Prostate gland (tissue), 2 donors: ENCODE measurements at regions of chr11 and their contacts with region 1.

Region 1: GRCh38 chr11:74611369-74611861 is 19.0 kb downstream of the POLD3 start:
- DNase-seq: no peak
- H3K4me3 ChIP-seq: no peak overlapping the region
- H3K27ac ChIP-seq: peak overlapping the region in 1 of 2 donors; percentile 43
- H3K4me1 ChIP-seq: peaks cover 7% of the 10 kb centered on the region
- H3K27me3 ChIP-seq: no peaks in the 10 kb centered on the region
- CTCF ChIP-seq: peak in 3 of 4 experiments; percentile 35 to 62 (median 62)
- POLR2A ChIP-seq: no peak

Region 2: DNA sequence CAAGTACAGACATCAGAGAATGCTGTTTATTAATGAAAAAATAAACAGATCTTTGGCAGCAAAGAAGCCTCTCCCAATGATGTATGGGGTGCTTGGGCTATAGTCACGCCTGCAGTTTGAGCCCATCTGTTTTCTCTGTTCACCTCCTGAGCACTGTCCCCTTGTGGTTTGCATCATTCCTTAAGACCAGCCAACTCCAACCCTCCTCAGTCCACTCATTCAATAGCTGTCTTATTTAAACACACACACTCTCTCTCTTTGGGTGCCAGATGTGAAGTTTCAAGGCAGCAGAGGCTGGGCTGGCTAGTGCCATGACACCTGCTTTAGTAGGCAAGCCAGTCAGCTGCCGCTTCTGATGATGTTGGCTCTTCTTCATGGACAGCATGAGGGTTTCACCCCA is 39.1 kb after region 1 on chr11:
- intact Hi-C with region 1: no loop called
- DNase-seq: no peak
- H3K4me3 ChIP-seq: no peak overlapping the region
- H3K27ac ChIP-seq: no peak overlapping the region
- H3K4me1 ChIP-seq: no peaks in the 10 kb centered on the region
- H3K27me3 ChIP-seq: no peaks in the 10 kb centered on the region
- CTCF ChIP-seq: no peak
- POLR2A ChIP-seq: no peak

Region 3: DNA sequence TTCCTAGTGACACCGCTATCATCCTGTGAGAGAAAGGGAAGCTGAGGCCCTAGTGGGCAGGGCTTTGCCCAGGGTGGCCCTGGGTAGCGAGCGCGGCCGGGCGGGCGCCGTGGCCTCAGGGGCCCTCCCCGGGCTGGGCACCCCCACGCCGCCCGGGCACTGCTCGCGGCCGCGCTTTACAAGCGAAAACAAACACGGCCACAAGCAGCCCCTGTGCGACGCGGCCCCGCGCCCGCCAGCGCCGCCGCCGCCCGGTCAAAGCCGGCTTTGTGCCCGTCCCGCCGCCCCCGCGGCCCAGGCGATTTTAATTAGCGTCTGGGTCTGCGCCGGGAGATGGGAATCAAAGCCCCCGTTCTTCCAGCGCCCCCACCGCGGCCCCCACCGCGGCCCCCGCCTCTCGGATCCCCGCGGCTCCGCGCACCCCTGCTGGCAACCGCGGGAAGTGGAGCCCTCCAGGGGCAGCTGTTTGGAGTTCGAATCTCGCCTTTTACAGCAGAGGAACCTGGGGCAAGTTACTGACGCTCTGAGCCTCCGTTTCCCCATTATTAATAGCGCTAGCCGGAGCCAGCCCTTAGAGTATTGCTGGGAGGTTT is 72.0 kb after region 1 on chr11:
- intact Hi-C with region 1: loop called (anchors 5 kb)
- DNase-seq: peak; percentile 36
- H3K4me3 ChIP-seq: peak overlapping the region; percentile 27 to 38
- H3K27ac ChIP-seq: peak overlapping the region; percentile 18 to 76
- H3K4me1 ChIP-seq: peaks cover 10% of the 10 kb centered on the region
- H3K27me3 ChIP-seq: no peaks in the 10 kb centered on the region
- CTCF ChIP-seq: peak in 3 of 4 experiments; percentile 28 to 48 (median 32)
- POLR2A ChIP-seq: no peak

Region 4: DNA sequence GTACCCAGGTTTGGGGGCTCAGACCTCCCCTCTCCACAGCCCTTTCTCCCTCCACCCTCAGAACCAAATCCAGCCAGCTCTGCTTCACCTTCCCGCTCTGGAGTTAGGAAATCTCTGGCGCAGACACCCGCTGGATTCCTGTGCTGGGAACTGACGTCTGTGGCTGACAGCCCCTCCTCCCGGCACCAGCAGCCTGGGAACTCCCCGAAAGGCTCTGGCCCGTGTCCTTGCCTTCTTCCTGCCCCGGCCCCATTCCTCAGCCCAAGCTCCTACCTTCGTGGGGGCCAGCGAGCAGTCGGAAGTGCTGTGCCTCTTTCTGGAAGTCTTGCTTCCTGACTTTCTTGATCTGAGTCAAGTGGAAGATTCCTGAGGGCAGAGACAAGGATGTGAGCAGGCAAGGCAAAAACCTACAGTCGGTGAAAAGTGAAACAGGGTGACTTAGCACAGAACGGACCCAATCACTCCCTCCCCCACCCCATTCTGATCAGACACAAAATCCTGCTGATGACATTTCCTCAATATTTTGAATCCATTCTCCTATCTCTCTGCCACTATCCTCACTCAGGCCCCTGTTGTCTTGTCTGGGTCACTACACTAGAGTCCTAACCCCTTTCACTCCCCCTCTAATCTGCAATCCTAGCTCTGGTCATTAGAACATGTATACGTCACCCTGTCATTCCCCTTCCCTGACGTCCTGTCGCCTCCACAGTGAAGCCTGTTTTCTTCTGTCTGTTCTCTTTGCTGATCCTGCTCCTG is 85.7 kb after region 1 on chr11:
- intact Hi-C with region 1: loop called (anchors 5 kb)
- DNase-seq: peak; percentile 79
- H3K4me3 ChIP-seq: no peak overlapping the region
- H3K27ac ChIP-seq: peak overlapping the region; percentile 19 to 63
- H3K4me1 ChIP-seq: no peaks in the 10 kb centered on the region
- H3K27me3 ChIP-seq: no peaks in the 10 kb centered on the region
- CTCF ChIP-seq: no peak
- POLR2A ChIP-seq: no peak

Region 5: DNA sequence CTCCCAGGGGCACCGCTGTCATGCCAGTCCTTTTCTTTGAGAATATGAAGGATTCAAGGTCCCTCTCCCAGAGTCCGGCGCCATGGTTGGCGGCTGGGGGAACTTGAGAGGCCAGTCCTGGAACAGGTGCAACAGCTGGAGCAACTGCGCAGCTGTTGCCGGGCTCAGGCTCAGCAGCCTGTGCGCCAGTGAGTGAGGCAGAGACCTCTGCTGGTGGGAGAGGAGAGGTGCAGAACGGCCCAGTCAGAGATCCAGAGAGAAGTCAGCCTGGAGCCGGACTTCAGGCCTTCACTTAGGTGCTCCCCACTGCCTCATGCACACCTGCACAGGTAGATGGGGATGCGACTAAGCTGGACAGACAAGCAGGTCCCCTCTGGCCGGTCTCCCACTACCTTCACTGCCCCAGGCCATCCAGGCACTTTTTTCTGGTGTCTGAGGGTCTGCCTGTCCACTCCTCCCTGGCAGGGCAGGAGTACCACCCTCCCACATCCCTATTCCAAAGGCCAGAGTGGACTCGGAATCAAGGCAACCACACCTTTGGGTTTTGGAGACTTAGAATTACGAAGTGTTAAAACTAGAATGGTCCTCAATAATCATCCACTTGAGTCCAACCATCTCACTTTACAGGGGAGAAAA is 115.2 kb after region 1 on chr11:
- intact Hi-C with region 1: loop called (anchors 2 kb)
- DNase-seq: peak; percentile 68
- H3K4me3 ChIP-seq: no peak overlapping the region
- H3K27ac ChIP-seq: no peak overlapping the region
- H3K4me1 ChIP-seq: no peaks in the 10 kb centered on the region
- H3K27me3 ChIP-seq: peaks cover 3% of the 10 kb centered on the region
- CTCF ChIP-seq: peak; percentile 33 to 94 (median 84)
- POLR2A ChIP-seq: no peak